ENCODE measurements at regions of chr14 and their contacts with region 1.

Region 1: GRCh38 chr14:71753126-71753830 is 179.0 kb upstream of the RGS6 start:
- DNase-seq: peak; percentile 61
- ATAC-seq: peak; percentile 45
- H3K4me3 Mint-ChIP-seq: no peak overlapping the region
- H3K27ac Mint-ChIP-seq: no peak overlapping the region
- H3K4me1 Mint-ChIP-seq: peaks cover 3% of the 10 kb centered on the region
- H3K27me3 Mint-ChIP-seq: peaks cover 4% of the 10 kb centered on the region
- CTCF ChIP-seq: peak; percentile 49

Region 2: DNA sequence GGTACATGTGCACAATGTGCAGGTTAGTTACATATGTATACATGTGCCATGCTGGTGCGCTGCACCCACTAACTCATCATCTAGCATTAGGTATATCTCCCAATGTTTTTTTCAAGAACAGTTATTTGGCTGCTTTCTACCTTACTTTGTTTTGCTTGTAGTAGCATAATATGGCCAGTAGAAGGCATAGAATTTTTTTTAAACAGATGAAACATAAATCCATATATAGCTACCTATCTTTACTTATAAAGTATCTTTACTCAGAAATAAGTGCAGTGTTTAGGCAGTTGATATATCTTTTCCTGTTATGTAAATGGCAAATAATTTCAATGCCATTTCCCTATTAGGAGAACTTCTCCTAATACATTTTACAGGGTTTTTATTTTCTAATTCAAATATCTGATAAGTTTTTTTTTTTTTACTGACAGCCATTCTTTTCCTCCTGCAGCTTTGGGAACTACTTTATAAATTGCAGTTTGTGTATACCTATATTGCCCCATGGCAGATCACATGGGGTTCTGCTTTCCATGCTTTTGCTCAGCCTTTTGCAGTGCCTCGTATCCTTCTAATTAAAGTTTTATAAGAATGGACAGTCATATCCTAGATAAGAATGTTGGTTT is 703.0 kb before region 1 on chr14:
- CTCF ChIA-PET with region 1: interaction called, 10 read pairs
- POLR2A ChIA-PET with region 1: no interaction called
- intact Hi-C with region 1: loop called (anchors 1 kb)
- DNase-seq: no peak
- ATAC-seq: no peak
- H3K4me3 Mint-ChIP-seq: no peak overlapping the region
- H3K27ac Mint-ChIP-seq: no peak overlapping the region
- H3K4me1 Mint-ChIP-seq: peaks cover 2% of the 10 kb centered on the region
- H3K27me3 Mint-ChIP-seq: no peaks in the 10 kb centered on the region
- CTCF ChIP-seq: peak; percentile 8

Region 3: GRCh38 chr14:71138448-71139293 is 614.6 kb before region 1 on chr14:
- CTCF ChIA-PET with region 1: interaction called, 84 read pairs
- POLR2A ChIA-PET with region 1: no interaction called
- intact Hi-C with region 1: loop called (anchors 1 kb)
- DNase-seq: peak; percentile 42
- ATAC-seq: peak; percentile 84
- H3K4me3 Mint-ChIP-seq: no peak overlapping the region
- H3K27ac Mint-ChIP-seq: no peak overlapping the region
- H3K4me1 Mint-ChIP-seq: peaks cover 28% of the 10 kb centered on the region
- H3K27me3 Mint-ChIP-seq: no peaks in the 10 kb centered on the region
- CTCF ChIP-seq: peak; percentile 64

Region 4: GRCh38 chr14:71574976-71575375 is 178.3 kb before region 1 on chr14:
- CTCF ChIA-PET with region 1: no interaction called
- POLR2A ChIA-PET with region 1: no interaction called
- intact Hi-C with region 1: no loop called
- DNase-seq: no peak
- ATAC-seq: no peak
- H3K4me3 Mint-ChIP-seq: no peak overlapping the region
- H3K27ac Mint-ChIP-seq: no peak overlapping the region
- H3K4me1 Mint-ChIP-seq: peaks cover 46% of the 10 kb centered on the region
- H3K27me3 Mint-ChIP-seq: no peaks in the 10 kb centered on the region
- CTCF ChIP-seq: no peak

Region 5: GRCh38 chr14:71776471-71777360 is 23.4 kb after region 1 on chr14:
- CTCF ChIA-PET with region 1: no interaction called
- POLR2A ChIA-PET with region 1: no interaction called
- intact Hi-C with region 1: no loop called
- DNase-seq: no peak
- ATAC-seq: no peak
- H3K4me3 Mint-ChIP-seq: no peak overlapping the region
- H3K27ac Mint-ChIP-seq: no peak overlapping the region
- H3K4me1 Mint-ChIP-seq: no peaks in the 10 kb centered on the region
- H3K27me3 Mint-ChIP-seq: peaks cover 19% of the 10 kb centered on the region
- CTCF ChIP-seq: no peak

Region 6: DNA sequence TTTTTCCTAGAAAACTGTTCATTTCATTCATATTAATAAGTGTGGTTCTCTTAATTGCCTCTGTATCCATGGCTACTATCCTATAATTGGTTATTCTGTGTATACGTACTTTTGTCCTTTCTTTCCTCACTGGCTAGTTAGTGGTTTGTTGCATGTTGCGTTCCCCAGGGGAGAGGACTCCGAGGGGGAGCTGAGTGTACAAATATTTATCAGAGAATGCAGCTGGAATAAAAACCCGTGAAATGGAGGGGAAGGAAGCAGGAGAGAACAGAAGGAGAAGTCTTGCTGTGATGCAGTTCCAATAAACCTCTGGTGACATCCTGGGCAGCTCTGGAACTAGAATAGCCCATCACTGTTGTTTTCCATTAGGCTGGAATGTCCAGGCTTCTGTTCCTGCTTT is 61.8 kb after region 1 on chr14:
- CTCF ChIA-PET with region 1: no interaction called
- POLR2A ChIA-PET with region 1: no interaction called
- intact Hi-C with region 1: no loop called
- DNase-seq: no peak
- ATAC-seq: no peak
- H3K4me3 Mint-ChIP-seq: no peak overlapping the region
- H3K27ac Mint-ChIP-seq: no peak overlapping the region
- H3K4me1 Mint-ChIP-seq: no peaks in the 10 kb centered on the region
- H3K27me3 Mint-ChIP-seq: peaks cover 8% of the 10 kb centered on the region
- CTCF ChIP-seq: no peak

Region 7: DNA sequence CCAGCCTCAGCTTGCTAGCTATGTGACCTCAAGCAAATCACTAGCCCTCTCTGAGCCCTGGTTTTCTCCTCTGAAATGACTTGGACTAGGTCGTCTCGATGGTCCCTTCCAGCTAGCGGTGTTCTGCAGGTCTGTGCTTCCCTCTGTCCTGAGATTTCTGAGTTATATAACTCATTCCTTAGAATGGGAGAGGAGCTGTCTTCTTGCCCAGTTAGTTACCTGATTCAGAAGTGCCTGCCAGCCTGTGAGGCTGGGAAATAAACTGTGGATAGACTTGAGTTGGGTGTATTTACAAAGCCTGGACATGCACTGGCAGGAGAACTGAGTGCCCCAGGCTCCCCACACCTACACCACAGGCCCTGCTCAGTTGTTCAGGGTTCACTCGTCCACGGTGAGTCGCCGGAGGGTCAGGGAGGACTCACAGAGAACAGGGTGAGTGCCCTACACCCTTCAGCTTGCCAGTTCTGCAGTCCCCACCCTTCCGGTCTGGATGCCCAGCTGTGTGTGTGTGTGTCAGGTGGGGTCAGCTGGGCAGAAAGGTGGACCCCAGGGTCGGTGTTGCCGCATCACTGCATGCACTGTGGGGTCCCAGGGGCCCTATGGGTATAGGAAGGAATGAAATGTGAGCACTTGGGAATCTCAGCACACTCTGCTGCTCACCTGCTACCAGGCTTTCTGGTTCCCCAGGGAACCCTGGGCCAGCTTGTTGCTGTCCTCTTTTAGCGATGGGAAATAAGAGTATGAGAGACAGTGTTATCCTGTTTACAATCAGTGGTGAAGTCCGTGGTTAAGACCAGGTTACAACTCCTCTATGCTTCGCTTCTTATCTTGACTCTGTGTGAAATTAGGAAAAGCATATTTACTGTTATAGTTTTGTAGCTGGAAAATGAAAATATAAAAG is 792.4 kb after region 1 on chr14:
- CTCF ChIA-PET with region 1: no interaction called
- POLR2A ChIA-PET with region 1: no interaction called
- intact Hi-C with region 1: no loop called
- DNase-seq: no peak
- ATAC-seq: peak; percentile 71
- H3K4me3 Mint-ChIP-seq: peak overlapping the region; percentile 57
- H3K27ac Mint-ChIP-seq: peak overlapping the region; percentile 72
- H3K4me1 Mint-ChIP-seq: peaks cover 56% of the 10 kb centered on the region
- H3K27me3 Mint-ChIP-seq: no peaks in the 10 kb centered on the region
- CTCF ChIP-seq: no peak

Measured in activated B cell treated with CpG ODN at 0.5 μM for 24 hours (primary cell).